ENCODE measurements at regions of chr9 and their contacts with region 1.

Region 1: GRCh38 chr9:113657703-113658544 is 194.4 kb downstream of the RGS3 start:
- DNase-seq: peak; percentile 84 to 87
- H3K4me3 ChIP-seq: no peak overlapping the region
- H3K4me3 Mint-ChIP-seq: no peak overlapping the region
- H3K27ac Mint-ChIP-seq: no peak overlapping the region
- H3K4me1 ChIP-seq: no peaks in the 10 kb centered on the region; the same call in 1 of the 2 replicates
- H3K4me1 Mint-ChIP-seq: no peaks in the 10 kb centered on the region
- H3K27me3 ChIP-seq: no peaks in the 10 kb centered on the region
- H3K27me3 Mint-ChIP-seq: peaks cover 7% of the 10 kb centered on the region
- CTCF ChIP-seq: peak; percentile 93 to 97

Region 2: DNA sequence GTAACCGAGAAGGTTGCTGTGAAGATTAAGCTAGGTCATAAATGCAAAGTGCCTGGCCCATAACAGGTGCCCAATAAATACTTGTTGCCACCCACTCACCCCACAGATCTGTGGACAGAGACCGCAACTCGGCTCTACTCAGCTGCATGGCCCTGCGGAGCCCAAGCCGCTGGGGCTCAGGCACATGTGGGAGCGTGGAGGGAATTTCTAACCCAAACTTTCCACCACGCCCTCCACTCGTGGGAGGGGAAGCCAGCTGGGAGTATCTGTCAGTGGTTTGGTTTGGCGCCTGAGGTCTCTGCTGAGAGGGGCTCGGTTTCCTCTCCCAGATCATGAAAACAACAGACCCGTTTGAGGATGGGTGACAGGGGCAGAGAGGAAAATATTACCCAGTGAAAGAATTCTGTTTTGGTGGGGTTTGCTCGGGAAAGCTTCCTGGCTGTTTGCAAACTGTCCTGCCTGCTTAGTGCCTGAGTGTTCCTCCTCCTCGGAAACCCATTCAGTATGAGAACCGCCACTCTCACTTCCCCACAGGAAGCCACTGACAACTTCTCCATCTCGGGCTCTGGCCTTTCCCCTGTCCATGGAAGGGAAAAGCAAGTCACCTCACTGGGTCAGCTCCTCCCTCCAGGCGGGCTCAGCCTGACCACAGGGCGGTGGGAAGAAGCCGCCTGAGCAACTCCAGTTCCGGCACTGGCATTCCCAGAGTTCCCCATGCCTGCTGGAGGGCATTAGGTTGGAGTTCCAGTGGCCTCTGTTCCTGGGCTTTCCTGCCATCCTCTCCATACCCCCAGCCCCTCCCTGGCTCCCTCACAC is 134.3 kb before region 1 on chr9:
- CTCF ChIA-PET with region 1: no interaction called
- POLR2A ChIA-PET with region 1: no interaction called
- intact Hi-C with region 1: loop called (anchors 10 kb)
- DNase-seq: no peak
- H3K4me3 ChIP-seq: no peak overlapping the region
- H3K4me3 Mint-ChIP-seq: no peak overlapping the region
- H3K27ac Mint-ChIP-seq: peak overlapping the region; percentile 12
- H3K4me1 ChIP-seq: peaks cover 35% of the 10 kb centered on the region
- H3K4me1 Mint-ChIP-seq: peaks cover 34% of the 10 kb centered on the region
- H3K27me3 ChIP-seq: no peaks in the 10 kb centered on the region
- H3K27me3 Mint-ChIP-seq: no peaks in the 10 kb centered on the region
- CTCF ChIP-seq: no peak

Region 3: GRCh38 chr9:113798062-113799030 is 140.4 kb after region 1 on chr9:
- CTCF ChIA-PET with region 1: no interaction called
- POLR2A ChIA-PET with region 1: no interaction called
- intact Hi-C with region 1: no loop called
- DNase-seq: no peak
- H3K4me3 ChIP-seq: no peak overlapping the region
- H3K4me3 Mint-ChIP-seq: no peak overlapping the region
- H3K27ac Mint-ChIP-seq: no peak overlapping the region
- H3K4me1 ChIP-seq: no peaks in the 10 kb centered on the region
- H3K4me1 Mint-ChIP-seq: no peaks in the 10 kb centered on the region
- H3K27me3 ChIP-seq: no peaks in the 10 kb centered on the region; the same call in 1 of the 2 replicates
- H3K27me3 Mint-ChIP-seq: peaks cover 6% of the 10 kb centered on the region
- CTCF ChIP-seq: no peak